CD8-positive, alpha-beta T cell (primary cell): ENCODE measurements at regions of chr3 and their contacts with region 1.

Region 1: GRCh38 chr3:129052675-129053074 is 7.9 kb upstream of the GP9 start:
- DNase-seq: no peak
- ATAC-seq: no peak
- H3K4me3 ChIP-seq: no peak overlapping the region
- H3K4me3 Mint-ChIP-seq: no peak overlapping the region
- H3K27ac ChIP-seq: no peak overlapping the region
- H3K27ac Mint-ChIP-seq: no peak overlapping the region
- H3K4me1 ChIP-seq: peaks cover 4% of the 10 kb centered on the region
- H3K4me1 Mint-ChIP-seq: peaks cover 10% of the 10 kb centered on the region
- H3K27me3 ChIP-seq: no peaks in the 10 kb centered on the region
- H3K27me3 Mint-ChIP-seq: no peaks in the 10 kb centered on the region
- CTCF ChIP-seq: no peak

Region 2: DNA sequence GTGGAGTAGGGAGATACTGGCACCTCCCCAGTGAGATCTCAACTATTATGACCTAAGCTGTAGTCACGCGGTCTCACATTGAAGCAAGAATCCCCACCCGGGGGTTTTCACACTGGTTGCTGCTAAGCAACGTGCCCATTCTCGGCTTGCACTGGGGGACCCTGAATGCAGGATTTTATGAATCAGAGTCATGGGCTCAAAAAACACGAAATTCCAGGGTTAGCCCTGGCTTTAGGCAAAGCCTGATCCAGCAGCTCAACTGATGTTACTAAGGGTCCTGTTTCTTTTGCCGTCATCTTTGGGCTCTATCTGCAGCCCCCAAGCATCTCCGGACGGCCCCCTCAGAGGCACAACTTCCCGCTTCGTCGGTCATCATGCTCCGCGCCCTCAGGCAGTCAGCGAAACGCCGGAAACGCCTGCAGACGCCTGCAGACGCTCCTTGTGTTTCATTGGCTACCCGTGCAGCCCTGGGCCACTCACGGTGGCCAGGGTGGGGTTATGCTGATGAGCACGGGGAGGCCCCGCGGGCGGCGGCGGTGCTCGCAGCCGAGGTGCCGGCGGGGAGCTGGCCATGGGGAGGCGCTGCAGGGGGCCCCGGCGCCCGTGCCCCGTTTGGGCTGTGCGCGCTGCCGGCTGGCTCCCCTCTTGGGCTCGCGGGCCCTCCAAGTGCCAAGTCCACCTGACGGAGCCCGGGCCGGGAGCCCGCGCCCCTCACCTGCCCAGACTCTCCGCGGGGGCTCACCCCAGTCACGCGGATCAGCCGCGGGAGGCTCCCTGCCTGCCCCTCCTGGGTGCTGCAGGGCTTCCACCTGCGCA is 25.7 kb before region 1 on chr3:
- CTCF ChIA-PET with region 1: interaction called, 25 read pairs
- POLR2A ChIA-PET with region 1: interaction called, 3 read pairs
- intact Hi-C with region 1: loop called (anchors 1 to 2 kb)
- DNase-seq: peak; percentile 85 to 98 (median 91)
- ATAC-seq: peak; percentile 98
- H3K4me3 ChIP-seq: peak overlapping the region; percentile 58 to 61
- H3K4me3 Mint-ChIP-seq: peak overlapping the region; percentile 85
- H3K27ac ChIP-seq: peak overlapping the region; percentile 75 to 80
- H3K27ac Mint-ChIP-seq: peak overlapping the region; percentile 99
- H3K4me1 ChIP-seq: peaks cover 22% of the 10 kb centered on the region
- H3K4me1 Mint-ChIP-seq: peaks cover 26% of the 10 kb centered on the region
- H3K27me3 ChIP-seq: no peaks in the 10 kb centered on the region
- H3K27me3 Mint-ChIP-seq: no peaks in the 10 kb centered on the region
- CTCF ChIP-seq: peak; percentile 84

Region 3: GRCh38 chr3:129082026-129082425 is 29.4 kb after region 1 on chr3:
- CTCF ChIA-PET with region 1: interaction called, 10 read pairs
- POLR2A ChIA-PET with region 1: no interaction called
- intact Hi-C with region 1: no loop called
- DNase-seq: no peak
- ATAC-seq: no peak
- H3K4me3 ChIP-seq: no peak overlapping the region
- H3K4me3 Mint-ChIP-seq: no peak overlapping the region
- H3K27ac ChIP-seq: no peak overlapping the region
- H3K27ac Mint-ChIP-seq: no peak overlapping the region
- H3K4me1 ChIP-seq: peaks cover 12% of the 10 kb centered on the region
- H3K4me1 Mint-ChIP-seq: peaks cover 17% of the 10 kb centered on the region
- H3K27me3 ChIP-seq: no peaks in the 10 kb centered on the region
- H3K27me3 Mint-ChIP-seq: no peaks in the 10 kb centered on the region
- CTCF ChIP-seq: no peak

Region 4: DNA sequence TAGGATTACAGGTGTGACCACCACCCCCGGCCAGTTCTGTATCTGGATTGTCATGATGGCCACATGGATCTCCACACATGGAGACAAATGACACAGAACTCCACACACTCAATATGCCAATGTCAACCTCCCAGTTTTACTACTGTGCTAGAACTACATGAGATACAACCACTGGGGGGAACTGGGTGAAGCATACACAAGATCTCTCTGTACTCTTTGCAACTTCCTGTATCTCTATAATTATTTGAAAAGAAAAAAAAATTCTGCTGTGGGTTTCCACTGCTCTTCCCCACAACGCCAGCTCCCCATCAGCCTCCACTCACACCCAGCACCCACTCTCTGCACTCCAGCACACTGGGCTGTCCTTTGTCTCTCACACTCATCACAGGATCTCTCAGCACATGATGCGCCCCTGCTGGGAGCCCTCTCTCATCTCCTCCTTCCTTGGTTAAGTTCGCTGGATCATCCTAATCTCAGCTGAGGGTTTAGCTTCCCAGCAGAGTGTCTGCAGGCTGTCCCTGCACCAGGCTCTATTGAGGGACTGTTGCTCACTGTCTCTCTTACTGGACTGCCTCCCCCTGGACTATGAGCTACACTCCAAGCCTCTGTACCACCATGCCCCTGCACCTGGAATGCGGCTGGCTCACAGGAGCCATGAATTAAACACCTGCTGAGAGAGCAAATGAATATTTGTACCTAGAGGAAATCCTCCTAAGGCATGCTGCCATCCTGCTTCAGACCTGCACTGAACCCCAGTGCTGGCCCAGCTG is 79.6 kb after region 1 on chr3:
- CTCF ChIA-PET with region 1: interaction called, 17 read pairs
- POLR2A ChIA-PET with region 1: no interaction called
- intact Hi-C with region 1: no loop called
- DNase-seq: no peak
- ATAC-seq: peak; percentile 62
- H3K4me3 ChIP-seq: no peak overlapping the region
- H3K4me3 Mint-ChIP-seq: no peak overlapping the region
- H3K27ac ChIP-seq: peak overlapping the region; percentile 17 to 33
- H3K27ac Mint-ChIP-seq: peak overlapping the region; percentile 81
- H3K4me1 ChIP-seq: peaks cover 16% of the 10 kb centered on the region
- H3K4me1 Mint-ChIP-seq: peaks cover 16% of the 10 kb centered on the region
- H3K27me3 ChIP-seq: no peaks in the 10 kb centered on the region
- H3K27me3 Mint-ChIP-seq: no peaks in the 10 kb centered on the region
- CTCF ChIP-seq: no peak

Region 5: GRCh38 chr3:129240436-129240835 is 187.8 kb after region 1 on chr3:
- CTCF ChIA-PET with region 1: interaction called, 105 read pairs
- POLR2A ChIA-PET with region 1: interaction called, 19 read pairs
- intact Hi-C with region 1: loop called (anchors 1 kb)
- DNase-seq: no peak
- ATAC-seq: no peak
- H3K4me3 ChIP-seq: no peak overlapping the region
- H3K4me3 Mint-ChIP-seq: no peak overlapping the region
- H3K27ac ChIP-seq: no peak overlapping the region
- H3K27ac Mint-ChIP-seq: no peak overlapping the region
- H3K4me1 ChIP-seq: peaks cover 2% of the 10 kb centered on the region
- H3K4me1 Mint-ChIP-seq: peaks cover 4% of the 10 kb centered on the region
- H3K27me3 ChIP-seq: peaks cover 0 to 3% of the 10 kb centered on the region in 2 experiments
- H3K27me3 Mint-ChIP-seq: peaks cover 2% of the 10 kb centered on the region
- CTCF ChIP-seq: no peak

Region 6: GRCh38 chr3:129627429-129628168 is 574.9 kb after region 1 on chr3:
- CTCF ChIA-PET with region 1: no interaction called
- POLR2A ChIA-PET with region 1: no interaction called
- intact Hi-C with region 1: no loop called
- DNase-seq: peak; percentile 34 to 80 (median 66)
- ATAC-seq: peak; percentile 82
- H3K4me3 ChIP-seq: peak overlapping the region; percentile 60 to 67
- H3K4me3 Mint-ChIP-seq: peak overlapping the region; percentile 88
- H3K27ac ChIP-seq: peak overlapping the region; percentile 44
- H3K27ac Mint-ChIP-seq: peak overlapping the region; percentile 72
- H3K4me1 ChIP-seq: peaks cover 13% of the 10 kb centered on the region
- H3K4me1 Mint-ChIP-seq: peaks cover 18% of the 10 kb centered on the region
- H3K27me3 ChIP-seq: no peaks in the 10 kb centered on the region
- H3K27me3 Mint-ChIP-seq: no peaks in the 10 kb centered on the region
- CTCF ChIP-seq: peak; percentile 74